Motor neuron (in vitro differentiated cells): ENCODE measurements at regions of chr9 and their contacts with region 1.

Region 1: GRCh38 chr9:37732086-37732741 is 21.4 kb upstream of the TRMT10B start:
- ATAC-seq: peak in 1 of 8 experiments; percentile 19
- H3K4me3 ChIP-seq: no peak overlapping the region
- H3K27ac ChIP-seq: no peak overlapping the region
- H3K4me1 ChIP-seq: peaks cover 0 to 4% of the 10 kb centered on the region in 2 donors

Region 2: GRCh38 chr9:37676411-37676830 is 55.8 kb before region 1 on chr9:
- in situ Hi-C with region 1: loop called in 1 of 9 experiments (anchors 10 kb)
- ATAC-seq: peak in 4 of 8 experiments; percentile 32 to 74 (median 72)
- H3K4me3 ChIP-seq: no peak overlapping the region
- H3K27ac ChIP-seq: no peak overlapping the region
- H3K4me1 ChIP-seq: no peaks in the 10 kb centered on the region